Caco-2 (cell line): ENCODE measurements at regions of chr1 and their contacts with region 1.

Region 1: GRCh38 chr1:35564037-35564883 is 6.7 kb downstream of the NCDN start:
- DNase-seq: peak; percentile 71 to 74
- H3K4me3 ChIP-seq: no peak overlapping the region
- H3K4me3 Mint-ChIP-seq: no peak overlapping the region
- H3K27ac Mint-ChIP-seq: no peak overlapping the region
- H3K4me1 ChIP-seq: 0 out of 2 replicates have a peak, but pooled peaks cover 4% of the 10 kb centered on the region
- H3K4me1 Mint-ChIP-seq: no peaks in the 10 kb centered on the region
- H3K27me3 ChIP-seq: no peaks in the 10 kb centered on the region
- H3K27me3 Mint-ChIP-seq: no peaks in the 10 kb centered on the region
- CTCF ChIP-seq: peak; percentile 55 to 66

Region 2: GRCh38 chr1:35451125-35451528 is 113.1 kb before region 1 on chr1:
- CTCF ChIA-PET with region 1: interaction called, 24 read pairs
- POLR2A ChIA-PET with region 1: no interaction called
- intact Hi-C with region 1: loop called (anchors 1 kb)
- DNase-seq: peak; percentile 63 to 69
- H3K4me3 ChIP-seq: no peak overlapping the region
- H3K4me3 Mint-ChIP-seq: no peak overlapping the region
- H3K27ac Mint-ChIP-seq: no peak overlapping the region
- H3K4me1 ChIP-seq: no peaks in the 10 kb centered on the region
- H3K4me1 Mint-ChIP-seq: no peaks in the 10 kb centered on the region
- H3K27me3 ChIP-seq: no peaks in the 10 kb centered on the region
- H3K27me3 Mint-ChIP-seq: no peaks in the 10 kb centered on the region
- CTCF ChIP-seq: peak; percentile 69 to 72

Region 3: DNA sequence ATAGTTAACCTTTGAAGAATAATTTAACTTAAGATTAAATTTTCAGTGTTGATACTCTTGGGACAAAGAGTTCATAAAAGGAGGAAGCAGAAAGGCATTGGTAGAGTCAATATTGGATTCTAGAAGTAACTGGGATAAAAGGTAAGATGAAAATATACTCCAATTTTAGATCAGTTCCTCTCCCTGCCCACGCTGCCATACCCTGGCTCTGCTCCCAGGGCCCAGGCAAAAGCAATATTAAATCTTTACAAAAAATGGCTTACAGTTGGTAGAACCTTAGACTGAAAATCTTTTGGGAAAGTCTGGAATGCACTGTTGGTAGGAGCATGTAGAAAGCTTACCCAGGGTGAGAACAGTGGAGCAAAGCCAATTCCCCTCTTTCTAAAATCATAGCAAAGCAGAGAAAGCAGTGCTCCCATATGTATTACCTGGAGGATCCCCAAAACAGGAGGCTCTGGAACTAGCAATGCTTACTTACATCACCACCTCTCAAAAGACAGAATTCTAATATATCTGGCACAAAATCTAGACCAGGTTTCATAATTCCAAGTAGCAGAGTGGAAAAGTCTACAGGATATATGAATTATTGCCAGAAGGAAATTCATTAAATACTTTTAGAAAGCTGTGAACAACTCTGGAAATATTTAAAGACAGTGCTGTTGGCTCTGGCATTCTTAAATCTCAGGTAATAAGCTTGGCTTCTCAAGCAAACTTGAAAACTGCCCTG is 31.6 kb before region 1 on chr1:
- CTCF ChIA-PET with region 1: no interaction called
- POLR2A ChIA-PET with region 1: no interaction called
- intact Hi-C with region 1: no loop called
- DNase-seq: no peak
- H3K4me3 ChIP-seq: no peak overlapping the region
- H3K4me3 Mint-ChIP-seq: no peak overlapping the region
- H3K27ac Mint-ChIP-seq: no peak overlapping the region
- H3K4me1 ChIP-seq: no peaks in the 10 kb centered on the region
- H3K4me1 Mint-ChIP-seq: no peaks in the 10 kb centered on the region
- H3K27me3 ChIP-seq: no peaks in the 10 kb centered on the region
- H3K27me3 Mint-ChIP-seq: no peaks in the 10 kb centered on the region
- CTCF ChIP-seq: no peak

Region 4: DNA sequence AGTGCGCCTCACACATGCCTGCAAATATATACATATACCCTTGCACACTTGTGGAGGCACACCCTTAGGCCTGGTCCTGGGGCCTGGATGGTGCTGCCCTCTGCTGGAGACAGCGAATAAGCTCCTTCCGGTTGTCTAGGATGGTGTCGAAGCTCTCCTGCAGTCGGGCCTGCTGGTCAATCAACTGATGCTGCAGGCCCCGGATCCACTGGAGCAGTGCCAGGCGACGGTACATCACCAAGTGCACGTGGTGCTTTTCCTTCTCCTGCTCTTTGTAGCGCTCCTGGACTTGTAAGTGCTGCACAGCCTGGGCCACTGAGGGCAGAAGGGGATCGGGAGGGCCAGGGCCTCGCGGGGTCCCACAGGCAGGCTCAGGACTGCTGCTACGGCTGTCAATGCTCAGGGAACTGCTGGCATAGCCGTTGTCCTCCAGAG is 151.3 kb after region 1 on chr1:
- CTCF ChIA-PET with region 1: interaction called, 12 read pairs
- POLR2A ChIA-PET with region 1: interaction called, 3 read pairs
- intact Hi-C with region 1: loop called (anchors 1 kb)
- DNase-seq: peak; percentile 57 to 67
- H3K4me3 ChIP-seq: no peak overlapping the region
- H3K4me3 Mint-ChIP-seq: no peak overlapping the region
- H3K27ac Mint-ChIP-seq: no peak overlapping the region
- H3K4me1 ChIP-seq: no peaks in the 10 kb centered on the region; the same call in 1 of the 2 replicates
- H3K4me1 Mint-ChIP-seq: peaks cover 22% of the 10 kb centered on the region
- H3K27me3 ChIP-seq: no peaks in the 10 kb centered on the region
- H3K27me3 Mint-ChIP-seq: no peaks in the 10 kb centered on the region
- CTCF ChIP-seq: peak; percentile 60 to 73

Region 5: GRCh38 chr1:35769188-35769758 is 205.0 kb after region 1 on chr1:
- CTCF ChIA-PET with region 1: interaction called, 4 read pairs
- POLR2A ChIA-PET with region 1: no interaction called
- intact Hi-C with region 1: loop called (anchors 1 kb)
- DNase-seq: peak; percentile 82 to 84
- H3K4me3 ChIP-seq: peak overlapping the region; percentile 77
- H3K4me3 Mint-ChIP-seq: peak overlapping the region; percentile 98
- H3K27ac Mint-ChIP-seq: peak overlapping the region; percentile 92
- H3K4me1 ChIP-seq: no peaks in the 10 kb centered on the region
- H3K4me1 Mint-ChIP-seq: no peaks in the 10 kb centered on the region
- H3K27me3 ChIP-seq: no peaks in the 10 kb centered on the region
- H3K27me3 Mint-ChIP-seq: no peaks in the 10 kb centered on the region
- CTCF ChIP-seq: no peak

Region 6: DNA sequence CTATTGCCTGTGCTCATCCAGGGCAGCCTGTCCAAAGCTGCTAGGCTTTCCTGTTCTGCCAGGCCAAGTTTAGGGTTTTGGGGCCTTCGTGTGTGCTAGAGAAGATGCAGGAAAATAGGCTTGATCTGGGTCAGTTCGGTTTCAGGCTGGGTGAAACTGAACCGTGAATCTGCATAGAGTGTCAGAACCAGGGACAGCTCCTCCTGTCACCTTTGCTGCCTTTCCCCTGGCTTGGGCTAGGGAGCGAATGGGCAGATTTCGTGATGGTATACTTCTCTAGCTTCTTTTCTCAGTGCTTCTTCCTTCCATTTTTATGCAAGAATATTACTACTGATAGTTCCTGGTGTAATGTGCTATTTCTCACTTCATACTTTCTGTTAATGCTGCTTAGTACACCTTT is 312.7 kb after region 1 on chr1:
- CTCF ChIA-PET with region 1: no interaction called
- POLR2A ChIA-PET with region 1: no interaction called
- intact Hi-C with region 1: no loop called
- DNase-seq: peak in 1 of 2 experiments; percentile 39
- H3K4me3 ChIP-seq: no peak overlapping the region
- H3K4me3 Mint-ChIP-seq: no peak overlapping the region
- H3K27ac Mint-ChIP-seq: no peak overlapping the region
- H3K4me1 ChIP-seq: peaks cover 8% of the 10 kb centered on the region; the same call in 1 of the 2 replicates
- H3K4me1 Mint-ChIP-seq: peaks cover 3% of the 10 kb centered on the region
- H3K27me3 ChIP-seq: no peaks in the 10 kb centered on the region
- H3K27me3 Mint-ChIP-seq: no peaks in the 10 kb centered on the region
- CTCF ChIP-seq: no peak